Right ventricle myocardium superior (tissue), 1 donor: ENCODE measurements at regions of chr2 and their contacts with region 1.

Region 1: DNA sequence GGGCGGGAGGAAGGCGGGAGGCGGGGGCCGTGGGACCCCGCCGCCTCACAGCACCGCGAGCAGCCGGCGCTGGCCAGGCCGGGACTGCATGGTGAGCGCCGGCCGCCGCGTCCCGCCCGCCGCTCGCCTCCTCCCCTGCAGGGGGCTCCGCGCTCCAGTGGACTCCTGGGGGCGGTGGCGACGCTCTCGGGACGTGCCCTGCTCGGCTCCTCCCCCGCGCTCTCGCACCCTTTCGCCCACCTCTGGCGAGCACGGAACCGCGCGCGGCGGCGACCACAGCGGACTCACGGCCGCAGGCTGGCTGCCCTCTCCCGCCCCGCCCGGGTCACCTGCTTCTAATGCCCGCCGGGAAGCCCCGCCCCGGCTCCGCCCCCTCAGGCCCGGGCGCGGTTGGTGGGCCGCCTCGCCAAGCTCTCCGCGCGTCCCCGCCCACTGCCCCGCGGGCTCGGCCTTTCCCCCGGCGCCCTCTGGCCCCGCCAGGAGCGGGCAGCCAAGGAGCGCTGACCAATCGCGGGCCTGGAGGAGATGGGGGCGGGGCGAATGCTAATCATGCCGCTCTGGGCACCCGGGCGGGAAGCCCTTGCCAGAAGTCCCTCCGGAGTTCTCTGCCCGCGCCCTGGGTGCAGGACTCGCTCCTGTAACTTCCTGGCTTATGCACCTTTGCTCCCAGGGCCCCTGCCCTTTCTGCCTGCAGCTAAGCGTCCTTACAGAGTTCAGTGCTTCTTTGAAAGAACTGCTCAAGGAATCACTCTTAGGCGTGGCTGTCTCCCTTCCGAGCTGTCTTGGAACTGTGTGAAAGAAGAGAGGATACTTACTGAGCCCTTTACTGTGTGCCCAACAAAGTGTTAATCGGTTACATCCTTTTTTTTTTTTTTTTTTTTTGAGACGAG is at the start of gene FZD5:
- DNase-seq: peak; percentile 98
- ATAC-seq: peak; percentile 94
- total RNA-seq, gene FZD5: 4.1 TPM

Region 2: DNA sequence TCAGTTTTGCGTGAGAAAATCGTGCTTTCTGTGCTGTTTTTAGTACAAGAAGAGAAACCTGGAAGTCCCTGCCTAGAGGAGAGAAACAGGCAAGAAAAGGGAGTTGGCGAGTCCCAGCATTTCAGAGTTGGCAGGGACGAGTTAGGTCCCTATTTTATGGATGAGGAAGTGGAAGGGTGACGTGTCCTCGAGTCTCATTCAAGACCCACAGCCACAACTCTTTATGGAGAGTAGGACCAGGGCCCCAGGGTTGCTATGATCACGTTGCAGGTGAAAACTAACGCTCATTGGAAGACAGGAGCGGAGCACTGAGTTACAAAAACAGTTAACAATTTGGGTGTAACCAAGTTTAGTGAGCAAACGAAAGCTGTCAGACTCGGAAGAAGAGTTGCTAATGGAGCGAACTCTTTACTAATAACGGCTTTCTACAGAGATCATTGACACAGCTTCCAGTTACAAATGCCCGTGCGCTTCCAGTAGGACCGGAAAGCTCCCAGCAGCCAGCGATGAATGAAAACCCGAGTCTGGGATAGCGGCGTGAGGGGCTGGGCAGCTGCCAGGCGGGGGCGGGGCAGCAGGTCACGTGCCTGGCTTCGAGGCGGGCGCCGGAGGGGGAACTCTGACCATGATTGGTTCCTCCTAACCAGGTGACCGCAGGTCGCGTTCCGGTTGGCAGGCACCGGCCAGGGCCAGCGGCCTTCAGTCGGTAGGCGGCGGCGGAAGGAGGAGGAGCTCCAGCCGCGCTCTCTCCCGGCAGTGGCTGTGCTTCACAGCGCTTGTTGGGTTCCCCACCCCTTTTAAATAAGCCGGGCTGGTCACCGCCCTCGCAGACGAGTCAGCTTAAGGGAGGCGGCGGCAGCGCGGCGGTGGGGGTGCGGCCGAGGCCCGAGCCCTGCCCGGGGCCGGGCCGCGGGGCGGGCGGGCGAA is 58.8 kb before region 1 on chr2 and contains the start of gene CCNYL1:
- intact Hi-C with region 1: no loop called
- DNase-seq: peak; percentile 99
- ATAC-seq: peak; percentile 99
- total RNA-seq, gene CCNYL1: 8.9 TPM

Region 3: DNA sequence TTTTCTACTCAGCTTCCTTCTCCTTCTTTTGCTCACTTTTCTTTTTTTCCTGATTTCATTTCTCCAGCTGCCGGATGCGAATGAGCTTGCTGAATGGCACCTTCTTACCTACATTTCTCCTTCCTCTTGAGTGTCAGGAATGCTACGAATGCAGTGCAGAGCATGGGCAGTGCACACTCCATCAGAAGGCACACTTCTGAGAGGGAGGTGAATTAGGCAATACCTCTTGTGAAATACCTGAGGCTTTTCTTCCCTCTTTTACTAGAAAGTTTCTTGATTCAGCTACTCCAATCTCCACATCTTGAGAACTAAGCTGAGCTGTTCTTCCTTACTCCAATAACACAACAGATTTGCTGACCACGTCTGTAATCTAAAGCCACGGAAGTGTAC is 204.4 kb after region 1 on chr2:
- intact Hi-C with region 1: loop called (anchors 5 kb)
- DNase-seq: no peak
- ATAC-seq: no peak

Region 4: DNA sequence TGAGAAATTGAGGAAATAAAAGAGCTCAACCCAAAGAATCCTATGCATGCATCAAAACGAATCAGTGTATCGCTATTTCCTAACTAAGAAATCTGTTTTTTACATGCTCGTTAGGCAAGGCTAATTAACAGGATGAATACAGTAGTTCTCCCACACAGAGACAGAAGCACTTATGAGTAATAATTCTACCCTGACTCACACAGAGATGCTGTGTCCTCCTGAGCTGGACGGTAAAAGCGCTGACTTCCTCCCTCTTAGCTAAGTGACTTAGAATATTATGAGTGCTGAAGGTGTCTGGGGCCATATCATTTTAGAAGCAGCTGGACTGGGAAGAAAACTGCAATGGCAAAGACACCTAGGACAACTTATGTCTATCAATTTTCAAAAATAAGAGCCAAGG is 237.0 kb after region 1 on chr2:
- intact Hi-C with region 1: no loop called
- DNase-seq: no peak
- ATAC-seq: no peak

Region 5: DNA sequence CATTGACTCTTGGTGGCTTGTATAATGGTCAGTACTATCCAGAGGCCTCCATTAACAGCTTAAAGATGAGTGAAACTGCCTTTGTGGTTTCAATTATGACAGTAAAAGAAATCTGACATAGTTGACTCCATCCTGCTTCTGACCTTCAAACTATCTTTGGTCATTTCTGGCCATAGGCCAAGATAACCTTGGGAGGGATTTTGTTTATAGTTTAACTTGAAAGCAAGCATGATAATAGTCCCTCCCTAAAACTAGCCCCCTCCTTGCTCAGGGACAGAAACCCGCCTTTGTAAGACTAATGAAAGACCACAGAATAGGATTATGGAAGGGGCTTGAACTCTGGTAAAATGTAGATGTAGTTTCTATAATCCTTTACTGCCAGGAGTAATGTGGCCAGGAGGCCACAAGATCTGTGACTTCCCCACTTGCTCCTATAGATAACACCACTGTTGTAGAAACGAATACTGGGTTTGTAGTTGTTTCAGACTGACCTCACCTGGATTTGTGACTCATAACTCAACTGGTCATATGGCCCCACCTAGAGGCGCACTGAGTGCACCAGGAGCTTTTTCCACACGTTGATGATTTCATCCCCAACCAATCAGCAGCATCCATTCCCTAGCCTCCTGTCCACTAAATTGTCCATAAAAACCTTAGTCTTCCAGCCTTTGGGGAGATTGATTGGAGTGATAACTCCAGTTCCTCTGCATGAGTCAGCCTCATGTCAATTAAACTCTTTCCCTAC is 264.1 kb after region 1 on chr2:
- intact Hi-C with region 1: loop called (anchors 5 kb)
- DNase-seq: no peak
- ATAC-seq: peak; percentile 79